ENCODE measurements at regions of chr10 and their contacts with region 1.

Region 1: DNA sequence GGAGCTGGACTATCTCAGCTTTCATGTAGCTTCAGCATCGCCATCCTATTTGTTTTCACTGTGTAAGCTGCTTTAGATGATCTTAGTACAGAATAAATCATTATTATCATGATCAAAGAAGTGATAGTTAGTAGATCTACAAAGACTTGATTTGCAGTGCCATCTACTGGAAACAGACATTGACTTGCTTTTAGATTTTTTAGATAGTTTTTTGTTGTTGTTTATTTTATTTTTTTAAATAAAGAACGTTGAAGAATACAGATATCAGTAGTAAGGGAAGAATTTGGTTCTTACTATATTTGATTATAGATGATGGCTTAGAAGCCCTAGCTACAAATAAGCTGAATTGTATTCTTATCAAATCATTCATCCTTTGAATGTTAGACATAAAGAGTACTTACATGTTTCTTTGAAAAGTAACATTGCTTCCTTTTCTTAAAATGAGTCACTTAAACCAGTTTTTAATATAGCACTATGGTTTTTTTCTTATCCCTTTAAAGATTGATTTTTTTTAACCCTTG is 6.3 kb upstream of the SFMBT2 start:
- DNase-seq: no peak
- H3K4me3 ChIP-seq: no peak overlapping the region
- H3K4me3 Mint-ChIP-seq: no peak overlapping the region
- H3K27ac Mint-ChIP-seq: no peak overlapping the region
- H3K4me1 ChIP-seq: no peaks in the 10 kb centered on the region
- H3K4me1 Mint-ChIP-seq: no peaks in the 10 kb centered on the region
- H3K27me3 ChIP-seq: no peaks in the 10 kb centered on the region
- H3K27me3 Mint-ChIP-seq: peaks cover 11% of the 10 kb centered on the region
- CTCF ChIP-seq: peak in 1 of 2 experiments; percentile 46

Region 2: GRCh38 chr10:6667679-6668270 is 749.4 kb before region 1 on chr10:
- CTCF ChIA-PET with region 1: no interaction called
- POLR2A ChIA-PET with region 1: no interaction called
- intact Hi-C with region 1: loop called (anchors 1 kb)
- DNase-seq: peak; percentile 53 to 58
- H3K4me3 ChIP-seq: no peak overlapping the region
- H3K4me3 Mint-ChIP-seq: no peak overlapping the region
- H3K27ac Mint-ChIP-seq: no peak overlapping the region
- H3K4me1 ChIP-seq: no peaks in the 10 kb centered on the region
- H3K4me1 Mint-ChIP-seq: no peaks in the 10 kb centered on the region
- H3K27me3 ChIP-seq: no peaks in the 10 kb centered on the region
- H3K27me3 Mint-ChIP-seq: peaks cover 17% of the 10 kb centered on the region
- CTCF ChIP-seq: peak; percentile 74 to 77

Region 3: GRCh38 chr10:6920072-6921019 is 496.8 kb before region 1 on chr10:
- CTCF ChIA-PET with region 1: interaction called, 4 read pairs
- POLR2A ChIA-PET with region 1: no interaction called
- intact Hi-C with region 1: loop called (anchors 1 kb)
- DNase-seq: peak; percentile 68 to 72
- H3K4me3 ChIP-seq: no peak overlapping the region
- H3K4me3 Mint-ChIP-seq: peak overlapping the region; percentile 8
- H3K27ac Mint-ChIP-seq: no peak overlapping the region
- H3K4me1 ChIP-seq: no peaks in the 10 kb centered on the region; the same call in 1 of the 2 replicates
- H3K4me1 Mint-ChIP-seq: peaks cover 6% of the 10 kb centered on the region
- H3K27me3 ChIP-seq: no peaks in the 10 kb centered on the region
- H3K27me3 Mint-ChIP-seq: peaks cover 14% of the 10 kb centered on the region
- CTCF ChIP-seq: peak; percentile 56 to 93

Region 4: GRCh38 chr10:7260412-7260900 is 156.7 kb before region 1 on chr10:
- CTCF ChIA-PET with region 1: no interaction called
- POLR2A ChIA-PET with region 1: no interaction called
- intact Hi-C with region 1: loop called (anchors 1 kb)
- DNase-seq: peak in 1 of 2 experiments; percentile 54
- H3K4me3 ChIP-seq: no peak overlapping the region
- H3K4me3 Mint-ChIP-seq: no peak overlapping the region
- H3K27ac Mint-ChIP-seq: no peak overlapping the region
- H3K4me1 ChIP-seq: no peaks in the 10 kb centered on the region; the same call in 1 of the 2 replicates
- H3K4me1 Mint-ChIP-seq: no peaks in the 10 kb centered on the region
- H3K27me3 ChIP-seq: no peaks in the 10 kb centered on the region
- H3K27me3 Mint-ChIP-seq: no peaks in the 10 kb centered on the region
- CTCF ChIP-seq: peak; percentile 48 to 54

Region 5: GRCh38 chr10:7318836-7319235 is 98.3 kb before region 1 on chr10:
- CTCF ChIA-PET with region 1: no interaction called
- POLR2A ChIA-PET with region 1: no interaction called
- intact Hi-C with region 1: no loop called
- DNase-seq: no peak
- H3K4me3 ChIP-seq: no peak overlapping the region
- H3K4me3 Mint-ChIP-seq: no peak overlapping the region
- H3K27ac Mint-ChIP-seq: no peak overlapping the region
- H3K4me1 ChIP-seq: no peaks in the 10 kb centered on the region
- H3K4me1 Mint-ChIP-seq: no peaks in the 10 kb centered on the region
- H3K27me3 ChIP-seq: no peaks in the 10 kb centered on the region
- H3K27me3 Mint-ChIP-seq: peaks cover 14% of the 10 kb centered on the region
- CTCF ChIP-seq: no peak

Region 6: DNA sequence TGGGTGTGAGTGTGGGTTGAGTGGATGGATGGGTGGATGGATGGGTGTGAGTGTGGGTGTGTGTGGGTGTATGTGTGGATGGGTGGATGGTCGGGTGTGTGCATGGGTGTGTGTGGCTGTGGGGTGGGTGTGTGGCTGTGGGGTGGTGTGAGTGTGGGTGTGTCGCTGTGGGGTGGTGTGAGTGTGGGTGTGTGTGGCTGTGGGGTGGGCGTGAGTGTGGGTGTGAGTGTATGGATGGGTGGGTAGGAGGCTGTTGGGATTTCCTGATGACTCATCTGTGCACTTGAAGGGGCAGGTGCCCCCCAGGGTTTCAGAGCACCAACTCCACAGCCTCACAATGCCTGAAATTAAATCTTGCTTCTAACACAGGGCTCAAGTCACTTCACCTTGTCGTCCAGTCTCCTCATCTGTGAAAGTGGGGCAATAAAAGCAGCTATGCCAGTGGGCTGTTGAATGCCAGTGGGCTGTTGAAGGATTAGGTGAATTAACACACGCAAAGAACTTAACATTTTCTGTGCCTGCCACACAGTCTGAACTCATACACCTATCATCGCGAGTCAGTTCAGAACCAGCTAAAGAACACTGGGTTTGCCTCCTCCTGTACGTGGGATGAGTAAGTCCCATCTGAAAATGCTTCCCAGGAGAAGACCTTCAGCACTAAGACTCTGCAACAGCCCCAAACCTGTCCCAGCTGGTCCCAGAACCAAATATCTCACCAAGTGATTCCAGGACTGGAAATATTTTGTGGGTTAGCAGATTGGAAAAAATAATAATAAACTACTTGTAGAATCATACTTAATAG is 38.4 kb before region 1 on chr10:
- CTCF ChIA-PET with region 1: no interaction called
- POLR2A ChIA-PET with region 1: no interaction called
- intact Hi-C with region 1: no loop called
- DNase-seq: no peak
- H3K4me3 ChIP-seq: no peak overlapping the region
- H3K4me3 Mint-ChIP-seq: no peak overlapping the region
- H3K27ac Mint-ChIP-seq: no peak overlapping the region
- H3K4me1 ChIP-seq: no peaks in the 10 kb centered on the region
- H3K4me1 Mint-ChIP-seq: no peaks in the 10 kb centered on the region
- H3K27me3 ChIP-seq: no peaks in the 10 kb centered on the region
- H3K27me3 Mint-ChIP-seq: peaks cover 11% of the 10 kb centered on the region
- CTCF ChIP-seq: no peak